ENCODE measurements at regions of chr2 and their contacts with region 1.

Region 1: DNA sequence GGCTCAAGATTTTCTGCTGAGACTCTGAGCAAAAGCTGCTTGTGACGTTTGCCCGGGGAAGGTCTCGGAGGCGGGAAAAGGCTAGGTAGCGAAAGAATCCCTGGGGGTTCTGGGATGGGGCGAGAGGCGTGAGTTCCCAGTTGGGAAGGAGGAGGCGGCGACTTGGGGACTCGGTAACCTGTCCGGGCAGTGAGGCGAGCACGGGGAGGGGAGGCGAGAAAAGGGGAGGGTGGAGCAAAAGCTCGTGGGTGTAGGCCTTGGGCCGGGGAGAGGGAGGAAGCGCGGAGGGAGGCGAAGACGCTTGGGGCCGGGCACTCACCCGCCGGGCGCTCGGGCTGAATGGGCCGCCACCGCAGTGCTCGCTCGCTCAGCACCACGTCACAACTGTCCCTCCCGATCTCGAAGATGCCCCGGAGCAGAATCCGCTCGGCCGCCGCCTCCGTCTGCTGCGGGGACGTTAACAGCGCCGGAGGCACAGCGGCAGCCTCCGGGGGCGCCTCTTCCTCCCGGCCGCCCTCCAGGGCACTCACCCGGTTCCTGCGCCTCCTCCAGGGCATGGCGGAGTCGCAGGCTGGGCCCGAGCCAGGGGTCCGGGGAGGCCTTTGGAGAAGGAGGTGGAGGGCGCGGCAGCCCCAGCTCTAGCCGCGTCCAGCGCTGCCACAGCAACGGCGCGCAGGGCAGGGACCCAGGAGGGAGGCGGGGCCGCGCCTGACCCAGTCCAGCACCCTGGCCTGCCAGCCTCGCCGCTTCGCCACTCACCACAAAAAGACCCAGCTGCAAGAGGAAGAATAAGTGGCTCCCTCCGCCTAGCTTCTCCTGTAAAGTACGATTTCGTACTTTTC is at the start of gene CERKL:
- DNase-seq: peak; percentile 17 to 44
- ATAC-seq: peak in 3 of 4 donors; percentile 32 to 57 (median 47)
- H3K4me3 ChIP-seq: peak within 1 kb of the TSS; percentile 64
- H3K27ac ChIP-seq: no peak within 1 kb of the TSS
- H3K4me1 ChIP-seq: no peaks in the 10 kb centered on the region
- H3K27me3 ChIP-seq: peaks cover 0 to 29% (median 8%) of the 10 kb centered on the region in 3 donors
- CTCF ChIP-seq: no peak
- total RNA-seq, gene CERKL: not detected

Region 2: DNA sequence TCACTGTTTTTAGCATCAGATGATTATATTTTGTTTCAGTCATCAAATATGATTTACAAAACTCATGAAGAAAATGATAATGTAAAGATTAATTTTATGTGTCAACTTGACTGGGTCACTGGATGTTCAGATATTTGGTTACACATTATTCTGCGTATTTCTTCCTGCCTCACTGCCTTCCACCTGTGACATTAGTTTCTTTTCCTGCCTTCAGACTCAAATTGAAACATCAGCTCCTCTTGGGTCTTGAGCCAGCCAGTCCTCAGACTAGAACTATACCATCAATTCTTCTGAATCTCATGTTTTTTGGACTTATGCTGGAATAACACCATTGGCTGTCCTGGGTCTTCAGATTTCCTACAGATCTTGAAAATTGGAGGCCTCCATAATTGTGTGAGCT is 1892.0 kb before region 1 on chr2:
- intact Hi-C with region 1: loop called in 1 of 2 experiments (anchors 5 kb)
- DNase-seq: no peak
- ATAC-seq: no peak
- H3K4me3 ChIP-seq: no peak overlapping the region
- H3K27ac ChIP-seq: no peak overlapping the region
- H3K4me1 ChIP-seq: peaks cover 6% of the 10 kb centered on the region
- H3K27me3 ChIP-seq: no peaks in the 10 kb centered on the region
- CTCF ChIP-seq: no peak

Region 3: DNA sequence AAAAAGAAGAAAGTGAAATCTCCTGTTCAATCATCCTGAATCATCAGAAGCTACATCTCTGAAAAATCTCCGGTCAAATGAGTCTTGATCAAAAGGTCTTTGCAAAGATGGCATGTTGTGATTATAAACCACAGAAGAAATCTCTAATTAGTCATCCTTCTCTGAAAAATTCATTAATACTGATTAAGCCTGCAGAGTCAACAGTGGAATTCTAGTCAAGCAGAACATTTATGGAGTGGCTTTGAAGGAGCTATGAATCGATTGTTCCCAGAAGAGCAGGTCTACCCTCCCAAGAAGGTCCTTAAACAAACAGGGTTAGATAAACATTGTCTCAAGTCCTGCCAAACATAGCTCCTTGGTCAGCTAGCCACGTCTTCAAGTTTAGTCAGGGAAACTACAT is 110.7 kb before region 1 on chr2:
- intact Hi-C with region 1: no loop called
- DNase-seq: no peak
- ATAC-seq: no peak
- H3K4me3 ChIP-seq: no peak overlapping the region
- H3K27ac ChIP-seq: no peak overlapping the region
- H3K4me1 ChIP-seq: no peaks in the 10 kb centered on the region
- H3K27me3 ChIP-seq: peaks cover 0 to 3% (median 0%) of the 10 kb centered on the region in 3 donors
- CTCF ChIP-seq: no peak

Region 4: DNA sequence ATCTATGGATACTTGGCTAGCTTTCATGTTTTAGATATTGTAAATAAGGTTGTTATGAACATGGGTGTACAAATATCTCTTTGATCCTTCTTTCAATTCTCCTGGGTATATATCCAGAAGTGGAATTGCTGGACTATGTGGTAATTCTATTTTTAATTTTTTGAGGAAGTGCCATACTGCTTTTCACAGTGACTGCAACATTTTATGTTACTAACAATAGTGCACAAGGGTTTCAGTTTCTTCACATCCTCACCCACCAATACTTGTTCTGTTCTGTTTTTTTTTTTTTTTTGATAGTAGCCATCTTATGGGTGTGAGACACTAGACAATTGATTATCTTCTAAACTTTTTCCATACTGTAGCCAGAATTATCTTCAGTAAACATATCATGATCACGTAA is 40.9 kb after region 1 on chr2:
- intact Hi-C with region 1: no loop called
- DNase-seq: no peak
- ATAC-seq: no peak
- H3K4me3 ChIP-seq: no peak overlapping the region
- H3K27ac ChIP-seq: no peak overlapping the region
- H3K4me1 ChIP-seq: no peaks in the 10 kb centered on the region
- H3K27me3 ChIP-seq: peaks cover 0 to 3% (median 3%) of the 10 kb centered on the region in 3 donors
- CTCF ChIP-seq: no peak